Dorsolateral prefrontal cortex (tissue), 120 donors: ENCODE measurements at regions of chr6 and their contacts with region 1.

Region 1: DNA sequence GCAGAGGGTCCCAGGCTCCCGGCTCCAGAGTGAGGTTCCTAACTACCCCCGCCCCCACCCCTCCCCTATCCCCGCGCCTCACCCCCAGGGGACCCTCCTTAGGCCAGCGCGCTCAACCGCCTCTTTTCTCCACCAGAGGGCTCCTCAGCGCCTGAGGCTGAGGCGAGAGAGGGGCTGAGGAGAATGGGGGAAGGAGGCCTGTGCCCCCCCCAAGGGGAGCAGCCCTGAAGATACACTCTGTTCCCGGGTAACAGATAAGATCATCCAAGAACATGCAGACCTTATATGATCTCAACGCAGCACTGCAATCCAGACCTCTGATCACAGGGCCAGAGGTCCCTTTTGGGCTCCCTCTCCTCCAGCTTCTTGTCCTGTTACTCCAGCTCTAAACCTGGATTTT is 43.3 kb upstream of the MRPS10 start:
- DNase-seq: no peak
- H3K4me3 ChIP-seq: peak overlapping the region in 1 of 59 donors; percentile 6
- H3K27ac ChIP-seq: no peak overlapping the region
- H3K27me3 ChIP-seq: no peaks in the 10 kb centered on the region
- CTCF ChIP-seq: peak in 53 of 56 donors; percentile 15 to 67 (median 48)

Region 2: DNA sequence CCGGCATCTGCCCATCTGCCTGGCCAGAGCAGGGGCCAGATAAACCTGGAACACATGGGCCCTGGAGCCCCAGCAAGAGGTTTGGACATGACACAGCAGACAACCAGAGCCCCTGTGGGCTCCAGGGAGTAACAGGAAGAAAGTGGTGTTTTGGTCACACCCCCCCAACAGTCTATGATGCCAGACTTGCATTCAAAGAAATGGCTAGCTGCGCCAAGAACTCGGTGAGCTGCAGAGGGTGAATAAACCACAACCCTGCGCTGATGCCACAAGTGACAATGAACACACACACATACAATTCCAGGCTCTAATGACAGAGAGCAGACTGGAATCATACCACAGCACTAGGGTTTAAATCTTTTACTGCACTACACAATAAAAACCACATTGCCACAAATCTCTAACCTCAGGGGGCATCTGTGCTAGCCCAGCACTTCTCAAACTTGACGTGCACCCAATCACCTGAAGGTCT is 156.7 kb after region 1 on chr6:
- intact Hi-C with region 1: no loop called
- DNase-seq: no peak
- H3K4me3 ChIP-seq: no peak overlapping the region
- H3K27ac ChIP-seq: peak overlapping the region in 2 of 59 donors; percentile 11 to 13
- H3K27me3 ChIP-seq: no peaks in the 10 kb centered on the region
- CTCF ChIP-seq: no peak

Region 3: GRCh38 chr6:42453031-42453653 is 192.2 kb after region 1 on chr6:
- intact Hi-C with region 1: loop called in 1 of 2 experiments (anchors 5 kb)
- DNase-seq: peak in 9 of 10 donors; percentile 41 to 89 (median 81)
- H3K4me3 ChIP-seq: peak overlapping the region; percentile 50 to 92 (median 79)
- H3K27ac ChIP-seq: peak overlapping the region in 56 of 59 donors; percentile 38 to 98 (median 90)
- H3K27me3 ChIP-seq: no peaks in the 10 kb centered on the region
- CTCF ChIP-seq: peak in 3 of 56 donors; percentile 17 to 22 (median 17)